ENCODE measurements at regions of chr19 and their contacts with region 1.

Region 1: DNA sequence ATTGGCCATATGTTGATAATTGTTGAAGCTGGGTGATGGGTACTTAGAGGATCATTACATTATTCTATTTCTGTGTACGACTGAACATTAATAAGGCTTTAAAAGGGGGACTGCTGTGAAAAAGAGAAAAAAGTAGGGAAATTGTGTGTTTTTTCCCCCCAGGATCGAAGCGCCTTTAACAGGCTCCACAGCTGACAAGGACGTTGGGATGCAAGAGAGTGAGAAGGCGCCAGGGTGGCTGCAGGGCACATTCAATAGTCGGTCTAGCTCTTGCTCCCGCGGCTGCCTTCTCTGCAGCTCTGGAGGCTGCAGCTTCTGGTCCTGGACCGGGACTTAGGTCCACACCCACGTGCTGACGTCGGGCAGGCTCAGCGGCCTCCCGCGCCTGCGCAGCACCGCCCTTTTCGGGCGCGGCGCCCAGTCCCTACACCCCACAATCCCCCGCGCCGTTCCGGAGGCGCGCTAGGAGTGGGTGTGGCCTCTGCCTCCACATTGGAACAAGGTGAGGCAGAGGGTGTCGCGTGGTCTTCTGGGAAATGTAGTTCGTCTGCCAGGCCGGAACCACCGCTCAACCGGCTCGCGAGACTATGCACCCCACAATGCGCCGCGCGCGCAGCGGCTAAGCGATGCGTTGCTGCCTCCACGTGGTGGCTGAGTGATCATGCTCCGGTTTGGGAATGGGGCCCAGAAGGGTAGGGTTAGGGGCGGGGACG is 4.9 kb upstream of the LRFN3 start:
- DNase-seq: peak; percentile 99
- ATAC-seq: peak; percentile 99 to 100 (median 100)
- H3K4me3 ChIP-seq: peak overlapping the region in 7 of 10 donors; percentile 20 to 43 (median 34)
- H3K27ac ChIP-seq: peak overlapping the region in 9 of 10 donors; percentile 48 to 88 (median 68)
- H3K4me1 ChIP-seq: peaks cover 3 to 42% (median 14%) of the 10 kb centered on the region in 9 donors
- H3K27me3 ChIP-seq: peaks cover 0 to 9% (median 0%) of the 10 kb centered on the region in 7 donors
- CTCF ChIP-seq: peak; percentile 61 to 96 (median 88)

Region 2: DNA sequence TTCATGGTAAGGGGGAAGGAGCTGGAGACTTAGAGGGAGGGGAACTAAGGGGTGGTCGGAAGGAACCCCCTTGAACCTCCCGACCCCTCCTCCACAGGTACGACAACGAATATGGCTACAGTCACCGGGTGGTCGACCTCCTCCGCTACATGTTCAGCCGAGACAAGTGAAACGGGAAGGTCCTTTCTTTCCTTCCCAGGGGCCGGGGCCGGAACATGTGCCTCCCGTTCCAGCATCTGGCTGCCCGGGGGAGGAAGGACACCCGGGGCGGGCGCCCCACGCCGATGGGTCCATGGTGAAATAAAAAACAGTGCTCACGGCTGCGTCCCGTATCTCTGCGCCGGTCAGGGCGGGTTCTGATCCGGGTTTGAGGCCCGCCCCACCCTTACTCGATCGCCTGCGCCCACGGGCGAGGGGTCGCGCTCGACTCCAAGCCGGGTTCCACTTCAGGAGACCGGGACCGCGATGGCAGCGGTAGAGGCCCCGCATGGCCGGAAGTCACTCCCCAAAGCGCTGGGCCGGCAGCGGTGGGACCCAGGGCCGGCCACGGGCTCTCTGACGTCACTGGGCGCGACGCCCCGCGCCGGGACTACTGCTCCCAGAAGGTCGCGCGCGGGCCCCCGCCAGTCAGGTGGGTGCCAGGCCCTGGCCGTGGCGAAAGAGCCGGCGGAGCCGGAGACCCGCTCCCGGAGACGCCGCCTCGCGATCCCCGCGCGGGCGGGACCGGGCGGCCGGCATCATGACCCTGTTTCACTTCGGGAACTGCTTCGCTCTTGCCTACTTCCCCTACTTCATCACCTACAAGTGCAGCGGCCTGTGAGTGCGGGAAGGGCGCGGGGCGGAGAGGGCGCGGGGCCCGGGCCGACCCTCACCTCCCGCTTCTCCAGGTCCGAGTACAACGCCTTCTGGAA is 386.1 kb before region 1 on chr19 and contains the start of gene TMEM147:
- intact Hi-C with region 1: loop called in 1 of 10 experiments (anchors 10 kb)
- DNase-seq: peak; percentile 93 to 95
- ATAC-seq: peak; percentile 97 to 99 (median 99)
- H3K4me3 ChIP-seq: peak within 1 kb of the TSS; percentile 53 to 97 (median 88)
- H3K27ac ChIP-seq: peak within 1 kb of the TSS in 9 of 10 donors; percentile 61 to 94 (median 83)
- H3K4me1 ChIP-seq: peaks cover 0 to 24% (median 21%) of the 10 kb centered on the region in 9 donors
- H3K27me3 ChIP-seq: no peaks in the 10 kb centered on the region
- CTCF ChIP-seq: no peak
- total RNA-seq, gene TMEM147: 62.8 to 103 (median 74.7) TPM

Region 3: GRCh38 chr19:35716801-35717666 is 214.3 kb before region 1 on chr19:
- intact Hi-C with region 1: loop called in 2 of 10 experiments (anchors 1 kb)
- DNase-seq: peak; percentile 95 to 96
- ATAC-seq: peak; percentile 93 to 97 (median 95)
- H3K4me3 ChIP-seq: peak overlapping the region; percentile 36 to 98 (median 82)
- H3K27ac ChIP-seq: peak overlapping the region; percentile 78 to 97 (median 92)
- H3K4me1 ChIP-seq: peaks cover 6 to 34% (median 27%) of the 10 kb centered on the region in 9 donors
- H3K27me3 ChIP-seq: no peaks in the 10 kb centered on the region
- CTCF ChIP-seq: peak; percentile 77 to 96 (median 93)

Region 4: DNA sequence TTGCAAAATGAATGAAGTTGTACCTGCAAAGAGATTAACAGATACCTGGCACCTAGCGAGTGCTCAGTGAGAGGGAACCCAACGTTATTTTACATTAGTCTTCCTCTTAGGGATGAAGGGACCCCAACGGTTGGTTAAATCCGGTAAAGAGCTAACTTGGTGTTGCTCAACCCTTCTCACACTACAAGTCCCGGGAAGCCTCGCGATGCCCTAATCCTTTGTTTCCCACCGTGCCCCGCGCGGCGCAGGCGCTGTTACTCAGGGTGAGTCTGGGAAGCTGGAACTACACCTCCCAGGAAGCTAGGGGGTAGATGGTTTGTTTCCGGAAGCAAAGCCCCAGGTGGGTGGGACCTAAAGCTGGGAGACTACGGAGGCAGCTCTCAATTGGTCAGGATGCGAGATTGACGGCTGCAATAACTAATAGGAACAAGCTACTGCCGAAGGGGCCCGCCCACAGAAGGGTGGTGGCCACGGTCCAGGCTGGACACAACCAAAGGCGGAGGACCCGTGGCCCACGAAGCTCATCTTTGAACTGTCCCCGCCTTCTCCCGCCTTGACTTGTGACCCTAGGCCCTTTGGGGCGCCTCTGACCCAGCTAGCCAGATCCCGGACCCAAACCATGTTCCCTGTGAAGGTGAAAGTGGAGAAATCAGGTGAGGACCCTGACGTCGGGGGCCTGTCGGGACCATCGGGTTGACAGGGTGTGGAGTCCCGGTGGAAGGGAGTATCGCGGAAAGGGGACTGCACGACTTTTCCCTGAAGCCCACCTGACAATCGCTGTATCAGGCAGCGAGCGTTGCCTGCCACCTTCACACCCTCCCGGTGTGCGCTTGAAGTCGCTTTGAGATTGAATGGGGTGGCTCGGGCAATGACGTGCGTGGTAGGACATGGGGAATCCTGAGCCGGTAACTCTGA is 183.0 kb before region 1 on chr19 and contains the start of gene LIN37:
- intact Hi-C with region 1: loop called in 5 of 10 experiments (anchors 2 to 10 kb)
- DNase-seq: peak; percentile 98 to 99
- ATAC-seq: peak; percentile 79 to 90 (median 87)
- H3K4me3 ChIP-seq: peak within 1 kb of the TSS; percentile 67 to 97 (median 88)
- H3K27ac ChIP-seq: peak within 1 kb of the TSS; percentile 54 to 93 (median 84)
- H3K4me1 ChIP-seq: peaks cover 7 to 63% (median 44%) of the 10 kb centered on the region in 9 donors
- H3K27me3 ChIP-seq: no peaks in the 10 kb centered on the region
- CTCF ChIP-seq: peak in 6 of 9 donors; percentile 5 to 38 (median 21)
- total RNA-seq, gene LIN37: 4.0 to 9.3 (median 4.8) TPM

Region 5: GRCh38 chr19:35775298-35776110 is 155.8 kb before region 1 on chr19 and contains the start of gene ARHGAP33:
- intact Hi-C with region 1: loop called in 2 of 10 experiments (anchors 10 kb)
- DNase-seq: peak; percentile 99
- ATAC-seq: peak; percentile 97 to 100 (median 99)
- H3K4me3 ChIP-seq: peak within 1 kb of the TSS; percentile 61 to 98 (median 85)
- H3K27ac ChIP-seq: peak within 1 kb of the TSS in 7 of 10 donors; percentile 17 to 75 (median 58)
- H3K4me1 ChIP-seq: peaks cover 0 to 18% (median 7%) of the 10 kb centered on the region in 9 donors
- H3K27me3 ChIP-seq: no peaks in the 10 kb centered on the region
- CTCF ChIP-seq: no peak
- total RNA-seq, gene ARHGAP33: 1.3 to 9.5 (median 5.6) TPM

Region 6: DNA sequence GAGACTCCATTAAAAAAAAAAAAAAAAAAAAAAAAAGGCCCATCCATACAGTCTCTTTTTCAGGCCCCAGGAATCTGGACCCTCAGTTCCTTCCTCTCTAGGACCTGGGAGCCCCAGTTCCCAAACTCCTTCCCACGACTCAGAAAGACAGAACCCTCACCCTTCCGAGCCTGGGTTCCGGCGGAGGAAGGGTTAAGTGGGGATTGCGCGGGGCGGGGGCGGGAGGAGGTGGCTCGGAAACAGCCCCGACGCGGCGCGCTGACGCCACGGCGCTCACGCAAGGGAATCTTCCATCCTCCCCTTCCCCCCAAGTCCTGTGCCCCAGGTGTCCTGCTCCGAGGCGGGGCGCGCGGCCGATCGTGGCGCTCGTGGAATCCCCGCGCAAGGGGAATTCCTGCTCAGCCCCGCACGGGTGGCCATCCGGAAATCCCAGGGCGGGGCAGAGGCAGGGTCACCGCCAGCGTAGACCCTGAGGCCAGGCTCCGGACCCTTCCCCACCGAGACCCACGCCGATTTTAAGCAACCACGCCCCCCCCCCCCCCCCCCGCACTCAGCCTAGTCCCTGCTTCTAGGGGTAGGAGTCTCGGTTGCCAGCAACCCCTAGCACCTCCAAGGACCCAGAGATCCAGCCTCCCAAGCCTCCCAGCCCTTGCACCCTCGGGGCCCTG is 31.6 kb before region 1 on chr19:
- intact Hi-C with region 1: loop called in 4 of 10 experiments (anchors 2 to 5 kb)
- DNase-seq: peak; percentile 81 to 83
- ATAC-seq: peak; percentile 80 to 93 (median 88)
- H3K4me3 ChIP-seq: peak overlapping the region; percentile 45 to 88 (median 78)
- H3K27ac ChIP-seq: peak overlapping the region; percentile 20 to 96 (median 83)
- H3K4me1 ChIP-seq: peaks cover 0 to 53% (median 12%) of the 10 kb centered on the region in 9 donors
- H3K27me3 ChIP-seq: no peaks in the 10 kb centered on the region
- CTCF ChIP-seq: no peak

Measured in heart right ventricle (tissue), 16 donors.